ENCODE measurements at regions of chr10 and their contacts with region 1.

Region 1: GRCh38 chr10:48656241-48656913 is 28.3 kb upstream of the WDFY4 start:
- DNase-seq: peak; percentile 96
- ATAC-seq: peak; percentile 94
- H3K4me3 ChIP-seq: peak overlapping the region; percentile 33 to 59 (median 53)
- H3K4me3 Mint-ChIP-seq: peak overlapping the region; percentile 86
- H3K27ac ChIP-seq: no peak overlapping the region
- H3K27ac Mint-ChIP-seq: peak overlapping the region; percentile 72
- H3K4me1 ChIP-seq: peaks cover 45 to 47% of the 10 kb centered on the region in 2 donors
- H3K4me1 Mint-ChIP-seq: peaks cover 52% of the 10 kb centered on the region
- H3K27me3 ChIP-seq: peaks cover 0 to 16% (median 8%) of the 10 kb centered on the region in 4 experiments
- H3K27me3 Mint-ChIP-seq: peaks cover 4% of the 10 kb centered on the region
- CTCF ChIP-seq: peak; percentile 99

Region 2: DNA sequence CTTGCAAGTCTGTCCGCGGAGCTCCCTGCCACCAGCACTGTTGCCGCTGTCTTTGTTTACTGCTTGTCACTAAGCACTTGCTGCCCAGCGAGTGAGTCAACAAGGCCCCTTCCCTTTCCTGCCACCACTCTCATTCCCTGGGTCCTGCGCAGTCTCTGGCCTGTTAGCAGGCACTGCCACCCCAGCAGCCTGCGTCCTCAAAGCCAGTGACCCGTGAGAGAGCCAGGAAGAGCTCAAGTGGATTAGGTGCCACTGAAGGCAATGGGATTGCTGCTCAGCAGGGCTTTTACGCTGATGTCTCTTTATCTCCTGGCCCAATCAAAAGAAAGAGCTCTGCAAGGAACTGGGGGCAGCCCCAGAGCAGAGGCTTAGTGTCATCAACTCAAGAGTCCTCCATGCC is 381.7 kb before region 1 on chr10 and contains the start of gene FRMPD2:
- CTCF ChIA-PET with region 1: no interaction called
- POLR2A ChIA-PET with region 1: no interaction called
- intact Hi-C with region 1: no loop called
- DNase-seq: no peak
- ATAC-seq: no peak
- H3K4me3 ChIP-seq: no peak within 1 kb of the TSS
- H3K4me3 Mint-ChIP-seq: no peak within 1 kb of the TSS
- H3K27ac ChIP-seq: no peak within 1 kb of the TSS
- H3K27ac Mint-ChIP-seq: no peak within 1 kb of the TSS
- H3K4me1 ChIP-seq: no peaks in the 10 kb centered on the region
- H3K4me1 Mint-ChIP-seq: peaks cover 13% of the 10 kb centered on the region
- H3K27me3 ChIP-seq: no peaks in the 10 kb centered on the region
- H3K27me3 Mint-ChIP-seq: no peaks in the 10 kb centered on the region
- CTCF ChIP-seq: no peak
- total RNA-seq, gene FRMPD2: not detected in 2 replicates

Region 3: DNA sequence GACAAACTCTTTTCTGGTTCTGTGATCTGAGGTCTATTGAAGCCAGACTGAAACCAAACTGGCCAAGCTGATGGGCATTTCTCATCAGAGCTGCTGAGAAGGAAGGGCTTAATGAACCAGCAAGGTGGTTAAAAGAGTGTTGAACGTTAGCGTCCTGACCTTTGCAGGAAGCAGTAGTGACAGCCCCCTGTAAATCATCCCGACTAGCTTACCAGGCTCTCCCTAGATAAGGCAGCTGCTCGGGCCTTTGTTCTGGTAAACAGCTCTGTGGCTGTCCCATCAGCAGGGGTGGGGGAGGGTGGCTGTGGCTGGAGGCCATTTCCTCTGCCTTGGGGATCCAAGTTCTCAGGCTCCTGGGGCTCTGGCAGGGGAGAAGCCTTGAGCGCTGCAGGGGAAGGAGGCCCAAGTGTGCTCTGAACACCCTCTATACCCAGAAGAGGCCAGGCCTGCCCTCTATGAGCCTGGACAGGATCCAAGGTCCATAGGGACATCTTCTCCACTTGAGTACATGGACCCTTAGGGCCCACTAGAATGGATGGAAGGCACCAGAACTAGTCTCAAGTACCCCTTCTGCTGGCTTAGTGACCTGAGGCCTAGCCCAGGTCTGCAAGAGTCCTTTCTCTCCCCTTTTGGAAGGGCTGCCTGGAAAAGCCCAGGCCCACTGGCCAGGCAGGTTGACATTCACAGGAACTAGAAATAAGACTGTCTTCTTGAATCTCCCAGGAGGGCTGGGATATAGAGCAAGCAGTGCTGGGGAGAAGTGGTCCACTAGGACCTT is 186.1 kb before region 1 on chr10:
- CTCF ChIA-PET with region 1: no interaction called
- POLR2A ChIA-PET with region 1: no interaction called
- intact Hi-C with region 1: no loop called
- DNase-seq: no peak
- ATAC-seq: no peak
- H3K4me3 ChIP-seq: no peak overlapping the region
- H3K4me3 Mint-ChIP-seq: no peak overlapping the region
- H3K27ac ChIP-seq: no peak overlapping the region
- H3K27ac Mint-ChIP-seq: no peak overlapping the region
- H3K4me1 ChIP-seq: no peaks in the 10 kb centered on the region
- H3K4me1 Mint-ChIP-seq: no peaks in the 10 kb centered on the region
- H3K27me3 ChIP-seq: no peaks in the 10 kb centered on the region
- H3K27me3 Mint-ChIP-seq: peaks cover 5% of the 10 kb centered on the region
- CTCF ChIP-seq: no peak

Region 4: GRCh38 chr10:48551861-48552591 is 104.4 kb before region 1 on chr10:
- CTCF ChIA-PET with region 1: interaction called, 512 read pairs
- POLR2A ChIA-PET with region 1: interaction called, 3 read pairs
- intact Hi-C with region 1: loop called (anchors 1 kb)
- DNase-seq: peak; percentile 79
- ATAC-seq: peak; percentile 82
- H3K4me3 ChIP-seq: no peak overlapping the region
- H3K4me3 Mint-ChIP-seq: no peak overlapping the region
- H3K27ac ChIP-seq: no peak overlapping the region
- H3K27ac Mint-ChIP-seq: no peak overlapping the region
- H3K4me1 ChIP-seq: peaks cover 10 to 13% of the 10 kb centered on the region in 2 donors
- H3K4me1 Mint-ChIP-seq: peaks cover 14% of the 10 kb centered on the region
- H3K27me3 ChIP-seq: peaks cover 0 to 6% (median 0%) of the 10 kb centered on the region in 4 experiments
- H3K27me3 Mint-ChIP-seq: peaks cover 7% of the 10 kb centered on the region
- CTCF ChIP-seq: peak; percentile 94

Region 5: DNA sequence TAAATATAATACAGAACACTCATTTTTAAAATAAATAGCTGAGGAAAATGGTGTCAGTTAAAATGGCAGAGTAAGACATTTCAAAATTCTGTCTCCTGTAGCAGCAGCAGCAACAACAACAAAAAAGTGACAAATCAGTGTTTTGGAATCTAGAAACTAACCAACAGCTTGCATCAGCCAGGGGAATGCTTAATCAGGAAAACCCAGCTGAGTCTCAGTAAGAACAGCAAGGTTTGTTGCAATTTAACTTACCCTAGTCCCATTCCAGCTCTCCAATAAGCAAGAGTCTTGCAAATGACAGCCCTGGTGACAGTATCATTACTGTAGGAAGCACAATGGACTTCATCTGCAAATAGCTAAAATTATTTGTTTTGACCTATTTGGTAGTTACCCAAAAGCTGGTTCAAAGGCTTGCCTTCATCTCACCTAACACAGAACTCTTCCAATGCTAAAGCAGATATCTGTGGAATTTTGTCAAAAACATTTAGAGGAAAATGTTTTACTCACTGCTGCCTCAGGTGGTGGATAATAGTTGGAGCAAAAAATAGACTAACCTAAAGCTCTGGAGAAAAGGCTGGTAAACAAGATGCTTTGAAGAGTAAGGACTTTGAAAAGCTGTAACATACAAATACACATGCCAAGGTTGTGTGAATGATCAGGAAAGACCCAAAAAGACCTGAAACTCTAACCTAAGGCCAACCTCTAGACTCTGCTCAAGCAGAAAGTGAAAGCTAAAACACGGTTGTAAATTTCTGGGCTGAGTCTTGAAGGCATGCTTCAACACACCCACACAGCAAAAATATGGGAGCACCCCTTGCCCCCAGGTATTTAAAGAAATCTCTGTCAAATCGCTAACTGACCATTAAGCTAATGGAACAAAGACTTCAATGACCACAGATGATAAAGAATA is 41.6 kb before region 1 on chr10:
- CTCF ChIA-PET with region 1: interaction called, 407 read pairs
- POLR2A ChIA-PET with region 1: interaction called, 3 read pairs
- intact Hi-C with region 1: loop called (anchors 1 kb)
- DNase-seq: no peak
- ATAC-seq: peak; percentile 45
- H3K4me3 ChIP-seq: no peak overlapping the region
- H3K4me3 Mint-ChIP-seq: peak overlapping the region; percentile 30
- H3K27ac ChIP-seq: no peak overlapping the region
- H3K27ac Mint-ChIP-seq: no peak overlapping the region
- H3K4me1 ChIP-seq: peaks cover 3 to 8% of the 10 kb centered on the region in 2 donors
- H3K4me1 Mint-ChIP-seq: peaks cover 10% of the 10 kb centered on the region
- H3K27me3 ChIP-seq: peaks cover 0 to 2% (median 1%) of the 10 kb centered on the region in 4 experiments
- H3K27me3 Mint-ChIP-seq: peaks cover 28% of the 10 kb centered on the region
- CTCF ChIP-seq: peak; percentile 64

Region 6: GRCh38 chr10:48691812-48692528 is 35.6 kb after region 1 on chr10:
- CTCF ChIA-PET with region 1: interaction called, 521 read pairs
- POLR2A ChIA-PET with region 1: no interaction called
- intact Hi-C with region 1: no loop called
- DNase-seq: no peak
- ATAC-seq: no peak
- H3K4me3 ChIP-seq: no peak overlapping the region
- H3K4me3 Mint-ChIP-seq: peak overlapping the region; percentile 56
- H3K27ac ChIP-seq: peak overlapping the region; percentile 9 to 99
- H3K27ac Mint-ChIP-seq: peak overlapping the region; percentile 82
- H3K4me1 ChIP-seq: peaks cover 85 to 92% of the 10 kb centered on the region in 2 donors
- H3K4me1 Mint-ChIP-seq: peaks cover 86% of the 10 kb centered on the region
- H3K27me3 ChIP-seq: no peaks in the 10 kb centered on the region
- H3K27me3 Mint-ChIP-seq: no peaks in the 10 kb centered on the region
- CTCF ChIP-seq: no peak

Region 7: DNA sequence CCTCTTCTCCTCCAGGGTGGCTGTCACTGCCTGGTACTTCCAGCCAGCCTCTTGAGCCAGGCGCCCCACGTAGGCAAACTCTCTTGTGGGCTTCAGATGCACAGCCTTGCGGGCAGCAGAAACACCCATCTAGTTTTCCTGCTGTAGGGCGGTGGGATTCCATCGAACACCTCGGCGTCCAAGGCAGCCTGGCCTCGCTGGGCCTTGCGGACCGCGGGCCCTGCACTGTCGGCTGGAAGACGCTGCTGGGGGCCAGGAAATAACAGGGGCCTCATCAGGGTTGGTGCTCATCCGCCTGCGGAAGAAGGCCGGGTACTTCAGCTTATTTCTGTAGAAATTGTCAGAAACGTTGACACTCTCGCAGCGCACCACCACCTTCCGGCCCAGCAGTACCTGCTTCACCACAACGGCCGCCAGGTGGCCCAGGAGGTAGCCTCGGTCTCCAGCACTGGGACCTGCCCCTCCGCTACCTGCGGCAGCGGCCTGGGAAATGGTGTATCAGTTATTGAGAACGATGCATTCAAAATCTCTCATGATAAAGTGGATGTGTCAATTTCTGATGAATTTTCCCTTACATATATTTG is 89.4 kb after region 1 on chr10:
- CTCF ChIA-PET with region 1: interaction called, 24 read pairs
- POLR2A ChIA-PET with region 1: no interaction called
- intact Hi-C with region 1: loop called (anchors 5 kb)
- DNase-seq: no peak
- ATAC-seq: no peak
- H3K4me3 ChIP-seq: no peak overlapping the region
- H3K4me3 Mint-ChIP-seq: no peak overlapping the region
- H3K27ac ChIP-seq: no peak overlapping the region
- H3K27ac Mint-ChIP-seq: no peak overlapping the region
- H3K4me1 ChIP-seq: peaks cover 15 to 19% of the 10 kb centered on the region in 2 donors
- H3K4me1 Mint-ChIP-seq: peaks cover 46% of the 10 kb centered on the region
- H3K27me3 ChIP-seq: no peaks in the 10 kb centered on the region
- H3K27me3 Mint-ChIP-seq: no peaks in the 10 kb centered on the region
- CTCF ChIP-seq: no peak

Region 8: DNA sequence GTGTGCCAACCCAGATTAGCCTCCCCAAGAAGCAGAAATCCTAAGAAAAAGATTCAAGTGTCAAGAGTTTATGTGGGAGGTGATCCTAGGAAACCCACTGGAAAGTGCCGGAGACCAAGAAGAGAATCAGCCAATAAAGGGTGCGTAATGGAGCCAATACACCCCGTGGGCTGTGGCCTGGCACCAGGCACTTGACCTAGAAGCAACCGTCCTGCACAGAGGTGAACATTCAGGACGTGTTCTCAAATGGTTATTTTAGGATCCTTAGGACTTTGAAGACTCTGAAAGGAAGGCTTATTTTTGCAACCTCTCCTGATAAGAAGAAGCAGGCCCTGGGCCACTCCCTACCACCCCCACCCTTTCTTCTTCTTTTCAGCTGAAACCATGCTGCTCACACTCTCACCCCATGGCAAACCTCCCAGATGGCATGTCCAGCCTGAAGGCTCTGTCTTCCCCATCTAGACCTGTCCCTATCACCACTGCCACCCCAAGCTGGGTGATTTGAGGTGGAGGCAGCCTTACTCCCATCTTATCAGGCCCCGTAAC is 412.4 kb after region 1 on chr10:
- CTCF ChIA-PET with region 1: no interaction called
- POLR2A ChIA-PET with region 1: no interaction called
- intact Hi-C with region 1: no loop called
- DNase-seq: no peak
- ATAC-seq: no peak
- H3K4me3 ChIP-seq: no peak overlapping the region
- H3K4me3 Mint-ChIP-seq: no peak overlapping the region
- H3K27ac ChIP-seq: no peak overlapping the region
- H3K27ac Mint-ChIP-seq: no peak overlapping the region
- H3K4me1 ChIP-seq: no peaks in the 10 kb centered on the region
- H3K4me1 Mint-ChIP-seq: no peaks in the 10 kb centered on the region
- H3K27me3 ChIP-seq: peaks cover 0 to 13% (median 4%) of the 10 kb centered on the region in 4 experiments
- H3K27me3 Mint-ChIP-seq: peaks cover 22% of the 10 kb centered on the region
- CTCF ChIP-seq: no peak

Region 9: DNA sequence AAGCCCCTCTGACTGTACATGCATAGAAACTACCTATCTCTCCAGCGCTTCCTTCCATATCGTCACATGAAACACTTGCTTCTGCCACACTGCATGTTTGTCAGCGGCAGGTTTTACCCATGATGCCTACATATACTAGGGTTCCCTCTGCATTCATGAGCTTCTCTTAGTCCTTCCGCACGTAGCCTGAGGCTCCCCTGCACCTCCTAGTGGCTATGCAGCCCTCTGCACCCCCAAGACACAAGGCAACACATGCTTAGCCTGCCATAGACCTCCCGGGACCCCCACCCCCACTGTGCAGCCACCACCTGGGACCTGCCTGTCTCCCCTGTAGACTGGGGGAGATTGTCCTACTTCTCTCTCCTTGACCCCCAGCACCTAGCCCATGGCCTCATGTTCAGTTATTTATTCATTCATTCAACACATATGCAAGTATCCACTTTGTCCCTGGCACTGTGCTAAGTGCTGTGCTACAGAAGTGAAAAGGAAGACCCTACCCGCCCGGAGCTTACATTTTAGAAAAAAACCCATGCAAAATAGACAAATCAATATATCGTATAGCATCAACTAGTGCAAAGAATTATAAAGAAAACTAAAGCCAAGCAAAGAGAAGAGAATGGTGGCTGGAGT is 508.3 kb after region 1 on chr10:
- CTCF ChIA-PET with region 1: interaction called, 6 read pairs
- POLR2A ChIA-PET with region 1: no interaction called
- intact Hi-C with region 1: loop called (anchors 2 kb)
- DNase-seq: peak; percentile 58
- ATAC-seq: peak; percentile 81
- H3K4me3 ChIP-seq: no peak overlapping the region
- H3K4me3 Mint-ChIP-seq: no peak overlapping the region
- H3K27ac ChIP-seq: no peak overlapping the region
- H3K27ac Mint-ChIP-seq: no peak overlapping the region
- H3K4me1 ChIP-seq: peaks cover 0 to 6% of the 10 kb centered on the region in 2 donors
- H3K4me1 Mint-ChIP-seq: peaks cover 12% of the 10 kb centered on the region
- H3K27me3 ChIP-seq: no peaks in the 10 kb centered on the region
- H3K27me3 Mint-ChIP-seq: no peaks in the 10 kb centered on the region
- CTCF ChIP-seq: peak; percentile 53

Measured in B cell (primary cell).